Naive thymus-derived CD8-positive, alpha-beta T cell (primary cell): ENCODE measurements at regions of chr1 and their contacts with region 1.

Region 1: GRCh38 chr1:214328770-214329469 is 48.0 kb downstream of the SMYD2 start:
- DNase-seq: peak; percentile 54 to 87 (median 72)
- ATAC-seq: peak; percentile 97 to 99
- H3K4me3 Mint-ChIP-seq: no peak overlapping the region
- H3K27ac Mint-ChIP-seq: peak overlapping the region in 2 of 10 donors; percentile 52 to 79
- H3K4me1 Mint-ChIP-seq: peaks cover 0 to 3% (median 1%) of the 10 kb centered on the region in 4 donors
- H3K27me3 Mint-ChIP-seq: no peaks in the 10 kb centered on the region

Region 2: GRCh38 chr1:214261206-214262123 is 67.5 kb before region 1 on chr1:
- POLR2A ChIA-PET with region 1: interaction called, 15 read pairs
- DNase-seq: peak; percentile 62 to 87 (median 78)
- ATAC-seq: peak; percentile 93 to 98
- H3K4me3 Mint-ChIP-seq: no peak overlapping the region
- H3K27ac Mint-ChIP-seq: no peak overlapping the region
- H3K4me1 Mint-ChIP-seq: peaks cover 0 to 6% (median 3%) of the 10 kb centered on the region in 4 donors
- H3K27me3 Mint-ChIP-seq: peaks cover 35 to 71% (median 60%) of the 10 kb centered on the region in 5 donors

Region 3: DNA sequence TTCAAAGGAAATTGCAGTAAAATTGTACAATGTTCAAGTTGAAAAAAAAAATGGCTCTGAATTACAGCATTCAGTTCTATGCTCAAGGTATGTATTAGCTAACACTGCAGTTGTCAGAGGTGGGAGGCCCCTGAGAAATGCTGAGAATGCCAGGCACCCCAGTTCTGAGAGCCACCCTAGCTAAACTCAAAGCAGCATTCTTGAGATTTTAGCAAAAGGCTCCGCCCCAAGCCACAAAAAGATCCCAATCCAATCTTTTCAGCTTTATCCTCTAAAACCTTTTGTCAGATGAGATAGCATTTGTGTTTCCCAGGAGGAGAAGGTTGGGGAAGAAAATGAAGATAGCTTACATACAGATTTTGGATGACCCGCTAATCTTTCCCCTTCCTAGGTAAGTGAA is 20.9 kb after region 1 on chr1:
- POLR2A ChIA-PET with region 1: no interaction called
- DNase-seq: no peak
- ATAC-seq: no peak
- H3K4me3 Mint-ChIP-seq: no peak overlapping the region
- H3K27ac Mint-ChIP-seq: no peak overlapping the region
- H3K4me1 Mint-ChIP-seq: no peaks in the 10 kb centered on the region
- H3K27me3 Mint-ChIP-seq: no peaks in the 10 kb centered on the region